IMR-90 (cell line): ENCODE measurements at regions of chr5 and their contacts with region 1.

Region 1: DNA sequence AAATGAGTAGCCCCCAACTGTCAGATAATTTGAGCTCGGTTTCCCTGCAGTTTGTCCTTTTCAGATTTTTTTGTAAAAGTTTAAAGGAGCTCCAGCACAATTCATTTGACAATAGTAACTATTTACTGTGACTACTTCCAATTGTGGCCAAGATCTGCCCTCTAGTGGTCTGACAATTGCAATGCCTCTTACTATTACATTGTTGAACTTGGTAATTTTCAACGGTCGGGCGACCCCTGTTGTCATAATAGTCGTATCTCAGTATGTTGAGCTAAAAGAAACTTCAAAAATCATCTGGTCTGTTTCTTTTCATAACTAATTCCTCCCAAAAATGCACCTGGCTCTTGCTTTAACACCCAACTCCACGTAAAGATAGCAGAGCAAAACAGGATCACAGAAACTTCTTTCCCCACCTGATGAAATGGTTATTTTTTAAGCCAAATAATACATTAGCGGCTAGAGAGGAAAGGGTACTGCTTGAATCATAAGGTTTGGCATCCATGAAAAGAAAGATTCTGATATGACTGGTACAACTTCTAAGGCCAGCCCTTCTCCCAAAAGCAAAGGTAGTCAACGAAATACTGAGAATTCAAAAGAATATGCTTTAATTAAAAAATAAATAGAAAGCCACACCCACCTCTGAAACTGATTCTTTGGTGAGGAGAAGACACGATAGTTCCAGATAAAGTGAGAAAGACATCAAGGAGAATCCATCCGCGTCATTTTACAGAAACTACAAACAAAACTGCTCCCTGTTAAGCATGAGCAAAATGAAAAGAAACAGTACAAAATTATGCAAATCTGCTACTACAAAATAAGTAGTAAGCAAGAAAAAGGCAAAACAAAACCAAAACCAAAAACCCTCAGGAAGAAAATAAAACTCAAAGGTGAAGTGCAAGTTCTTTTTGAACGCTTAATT is 76.9 kb upstream of the HTR4 start:
- DNase-seq: peak; percentile 87
- ATAC-seq: peak; percentile 88
- H3K4me3 ChIP-seq: no peak overlapping the region; the same call in 1 of the 2 replicates
- H3K27ac ChIP-seq: no peak overlapping the region
- H3K4me1 ChIP-seq: peaks cover 11% of the 10 kb centered on the region
- H3K27me3 ChIP-seq: peaks cover 5% of the 10 kb centered on the region
- CTCF ChIP-seq: peak; percentile 100
- POLR2A ChIP-seq: no peak
- RAD21 ChIP-seq: peak; percentile 87

Region 2: GRCh38 chr5:147949711-147950573 is 781.3 kb before region 1 on chr5:
- CTCF ChIA-PET with region 1: interaction called, 5 read pairs
- POLR2A ChIA-PET with region 1: no interaction called
- dilution Hi-C with region 1: no loop called
- in situ Hi-C with region 1: no loop called
- intact Hi-C with region 1: loop called (anchors 2 kb)
- DNase-seq: peak; percentile 39
- ATAC-seq: peak; percentile 64
- H3K4me3 ChIP-seq: no peak overlapping the region
- H3K27ac ChIP-seq: no peak overlapping the region
- H3K4me1 ChIP-seq: no peaks in the 10 kb centered on the region
- H3K27me3 ChIP-seq: no peaks in the 10 kb centered on the region
- CTCF ChIP-seq: peak; percentile 63
- POLR2A ChIP-seq: no peak
- RAD21 ChIP-seq: peak; percentile 54

Region 3: GRCh38 chr5:148290271-148291195 is 440.7 kb before region 1 on chr5:
- CTCF ChIA-PET with region 1: interaction called, 8 read pairs
- POLR2A ChIA-PET with region 1: no interaction called
- dilution Hi-C with region 1: no loop called
- in situ Hi-C with region 1: no loop called
- intact Hi-C with region 1: loop called (anchors 1 kb)
- DNase-seq: peak; percentile 19
- ATAC-seq: peak; percentile 54
- H3K4me3 ChIP-seq: no peak overlapping the region
- H3K27ac ChIP-seq: no peak overlapping the region
- H3K4me1 ChIP-seq: no peaks in the 10 kb centered on the region
- H3K27me3 ChIP-seq: no peaks in the 10 kb centered on the region
- CTCF ChIP-seq: peak; percentile 50
- POLR2A ChIP-seq: no peak
- RAD21 ChIP-seq: peak; percentile 52

Region 4: GRCh38 chr5:148443998-148444397 is 287.2 kb before region 1 on chr5:
- CTCF ChIA-PET with region 1: interaction called, 59 read pairs
- POLR2A ChIA-PET with region 1: no interaction called
- dilution Hi-C with region 1: no loop called
- in situ Hi-C with region 1: loop called (anchors 5 kb)
- intact Hi-C with region 1: loop called (anchors 1 kb)
- DNase-seq: peak; percentile 78
- ATAC-seq: peak; percentile 89
- H3K4me3 ChIP-seq: no peak overlapping the region
- H3K27ac ChIP-seq: no peak overlapping the region
- H3K4me1 ChIP-seq: no peaks in the 10 kb centered on the region
- H3K27me3 ChIP-seq: peaks cover 3% of the 10 kb centered on the region; the same call in 1 of the 2 replicates
- CTCF ChIP-seq: peak; percentile 77
- POLR2A ChIP-seq: no peak
- RAD21 ChIP-seq: peak; percentile 68

Region 5: DNA sequence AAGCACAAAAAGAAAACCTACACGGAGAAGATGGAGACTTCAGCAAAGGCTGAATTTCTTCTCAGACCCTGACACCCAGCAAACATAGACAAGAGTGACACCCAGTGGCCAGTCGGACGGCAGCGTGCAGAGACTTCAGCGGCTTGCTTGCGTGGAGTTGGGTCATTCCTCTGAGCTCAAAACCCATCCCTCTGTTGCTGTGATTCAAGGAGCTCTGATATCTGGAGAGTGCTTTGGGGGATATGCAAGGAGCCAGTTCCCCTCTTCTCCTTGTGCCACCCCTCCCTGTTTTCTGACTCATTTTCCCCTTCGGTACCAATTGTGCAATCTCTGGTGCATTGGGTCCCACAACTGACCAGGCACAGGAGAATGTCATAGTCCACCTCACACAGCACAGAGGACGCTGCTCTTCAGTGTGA is 304.2 kb after region 1 on chr5:
- CTCF ChIA-PET with region 1: interaction called, 38 read pairs
- POLR2A ChIA-PET with region 1: no interaction called
- dilution Hi-C with region 1: no loop called
- in situ Hi-C with region 1: loop called (anchors 5 kb)
- intact Hi-C with region 1: loop called (anchors 1 kb)
- DNase-seq: peak; percentile 83
- ATAC-seq: peak; percentile 87
- H3K4me3 ChIP-seq: no peak overlapping the region
- H3K27ac ChIP-seq: no peak overlapping the region
- H3K4me1 ChIP-seq: peaks cover 9% of the 10 kb centered on the region
- H3K27me3 ChIP-seq: no peaks in the 10 kb centered on the region
- CTCF ChIP-seq: peak; percentile 98
- POLR2A ChIP-seq: peak; percentile 34; the same call in 1 of the 2 replicates
- RAD21 ChIP-seq: peak; percentile 98

Region 6: DNA sequence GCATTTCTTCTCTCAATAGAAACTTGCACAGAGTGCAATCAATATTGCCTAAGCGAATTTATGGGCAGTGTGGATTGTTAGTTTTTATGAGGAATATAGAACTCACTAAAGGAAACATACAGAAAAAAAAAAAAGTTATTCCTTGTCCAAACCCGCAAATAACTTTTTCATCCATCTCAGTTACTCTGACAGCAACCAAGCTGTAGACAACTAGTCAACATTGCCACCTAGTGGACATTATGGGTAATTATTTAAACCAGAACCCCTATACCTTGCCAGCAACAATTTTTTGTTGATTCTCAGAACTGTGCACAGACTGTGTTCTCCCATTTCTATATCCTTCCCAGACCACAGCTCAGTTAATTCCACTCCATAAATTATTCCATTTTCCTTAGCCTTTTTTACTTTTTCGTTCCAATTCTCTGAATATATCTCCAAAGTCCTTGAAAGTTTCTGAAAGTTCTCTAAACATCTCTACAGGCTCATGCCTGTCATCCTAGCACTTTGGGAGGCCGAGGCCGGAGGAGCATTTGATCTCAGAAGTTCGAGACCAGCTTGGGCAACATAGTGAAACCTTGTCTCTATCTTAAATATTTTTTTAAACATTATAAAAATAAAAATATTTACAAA is 537.8 kb after region 1 on chr5:
- CTCF ChIA-PET with region 1: no interaction called
- POLR2A ChIA-PET with region 1: no interaction called
- dilution Hi-C with region 1: no loop called
- in situ Hi-C with region 1: loop called (anchors 10 kb)
- intact Hi-C with region 1: loop called (anchors 5 kb)
- DNase-seq: peak; percentile 61
- ATAC-seq: no peak
- H3K4me3 ChIP-seq: no peak overlapping the region
- H3K27ac ChIP-seq: no peak overlapping the region
- H3K4me1 ChIP-seq: peaks cover 4% of the 10 kb centered on the region
- H3K27me3 ChIP-seq: no peaks in the 10 kb centered on the region
- CTCF ChIP-seq: peak; percentile 72
- POLR2A ChIP-seq: no peak
- RAD21 ChIP-seq: peak; percentile 75